Breast epithelium (tissue), 4 donors: ENCODE measurements at regions of chr11 and their contacts with region 1.

Region 1: GRCh38 chr11:134157451-134157850 is 66.3 kb downstream of the NCAPD3 start:
- DNase-seq: no peak
- H3K4me3 ChIP-seq: no peak overlapping the region
- H3K27ac ChIP-seq: no peak overlapping the region
- H3K4me1 ChIP-seq: no peaks in the 10 kb centered on the region
- H3K27me3 ChIP-seq: no peaks in the 10 kb centered on the region
- CTCF ChIP-seq: no peak
- POLR2A ChIP-seq: no peak

Region 2: GRCh38 chr11:133228471-133229329 is 928.8 kb before region 1 on chr11:
- intact Hi-C with region 1: no loop called
- DNase-seq: no peak
- H3K4me3 ChIP-seq: peak overlapping the region in 2 of 3 donors; percentile 30 to 54
- H3K27ac ChIP-seq: no peak overlapping the region
- H3K4me1 ChIP-seq: no peaks in the 10 kb centered on the region
- H3K27me3 ChIP-seq: peaks cover 0 to 20% of the 10 kb centered on the region in 2 donors
- CTCF ChIP-seq: no peak
- POLR2A ChIP-seq: no peak

Region 3: DNA sequence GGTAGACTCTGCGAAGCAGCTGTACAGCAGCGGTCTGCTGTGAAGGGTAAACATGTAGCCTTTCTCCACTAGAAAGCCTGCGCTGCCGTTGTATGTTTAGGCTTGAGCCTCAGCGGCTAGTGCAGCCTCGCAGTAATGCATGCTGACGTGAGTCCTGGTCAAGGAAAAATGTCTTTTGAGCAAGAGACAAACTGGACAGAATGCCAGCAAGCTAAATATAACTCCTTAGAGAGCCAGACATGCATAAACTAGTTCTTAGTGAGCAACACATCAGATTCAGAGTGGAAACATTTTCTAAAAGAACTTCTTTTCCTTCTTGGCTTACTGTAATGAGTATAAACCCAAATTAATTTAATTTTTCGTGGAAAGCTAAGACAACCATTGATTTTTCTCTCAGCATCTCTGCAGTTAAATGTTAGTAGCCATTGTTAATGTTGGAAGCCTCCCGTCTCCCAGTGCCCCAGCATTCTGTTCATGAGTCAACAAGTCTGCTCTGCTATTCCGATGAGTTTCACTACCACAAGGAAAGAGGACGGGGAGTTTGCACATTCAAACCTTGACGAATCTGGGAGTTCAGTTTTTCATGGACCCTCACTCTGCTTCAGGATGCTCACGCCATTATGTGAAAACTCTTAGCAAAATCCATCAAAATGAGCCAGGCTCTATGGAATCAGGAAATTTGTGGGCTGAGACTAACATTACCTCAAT is 37.2 kb before region 1 on chr11:
- intact Hi-C with region 1: no loop called
- DNase-seq: peak in 1 of 2 donors; percentile 43
- H3K4me3 ChIP-seq: peak overlapping the region; percentile 12 to 56 (median 20)
- H3K27ac ChIP-seq: peak overlapping the region; percentile 79 to 93
- H3K4me1 ChIP-seq: no peaks in the 10 kb centered on the region
- H3K27me3 ChIP-seq: no peaks in the 10 kb centered on the region
- CTCF ChIP-seq: no peak
- POLR2A ChIP-seq: no peak

Region 4: DNA sequence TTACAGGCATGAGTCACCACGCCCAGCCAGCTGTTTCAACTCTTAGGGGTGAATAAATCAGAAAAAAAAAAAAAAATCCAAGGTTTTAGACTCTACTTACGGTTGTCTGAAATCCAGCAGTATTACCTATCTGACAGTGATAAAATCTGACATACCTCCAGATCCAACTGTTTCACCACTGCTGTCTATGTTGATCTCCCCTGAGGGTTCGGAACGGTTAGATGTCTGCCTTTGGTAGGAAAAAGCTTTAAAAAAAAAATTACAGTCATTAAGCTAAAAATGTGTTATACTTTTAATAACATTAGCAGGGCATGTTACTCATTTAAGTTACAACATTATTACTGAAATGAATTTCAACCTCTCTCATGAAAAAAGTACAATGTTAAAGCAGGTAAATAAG is 45.2 kb after region 1 on chr11:
- intact Hi-C with region 1: loop called (anchors 2 kb)
- DNase-seq: no peak
- H3K4me3 ChIP-seq: no peak overlapping the region
- H3K27ac ChIP-seq: no peak overlapping the region
- H3K4me1 ChIP-seq: no peaks in the 10 kb centered on the region
- H3K27me3 ChIP-seq: no peaks in the 10 kb centered on the region
- CTCF ChIP-seq: no peak
- POLR2A ChIP-seq: no peak